IMR-90 (cell line): ENCODE measurements at regions of chr9 and their contacts with region 1.

Region 1: DNA sequence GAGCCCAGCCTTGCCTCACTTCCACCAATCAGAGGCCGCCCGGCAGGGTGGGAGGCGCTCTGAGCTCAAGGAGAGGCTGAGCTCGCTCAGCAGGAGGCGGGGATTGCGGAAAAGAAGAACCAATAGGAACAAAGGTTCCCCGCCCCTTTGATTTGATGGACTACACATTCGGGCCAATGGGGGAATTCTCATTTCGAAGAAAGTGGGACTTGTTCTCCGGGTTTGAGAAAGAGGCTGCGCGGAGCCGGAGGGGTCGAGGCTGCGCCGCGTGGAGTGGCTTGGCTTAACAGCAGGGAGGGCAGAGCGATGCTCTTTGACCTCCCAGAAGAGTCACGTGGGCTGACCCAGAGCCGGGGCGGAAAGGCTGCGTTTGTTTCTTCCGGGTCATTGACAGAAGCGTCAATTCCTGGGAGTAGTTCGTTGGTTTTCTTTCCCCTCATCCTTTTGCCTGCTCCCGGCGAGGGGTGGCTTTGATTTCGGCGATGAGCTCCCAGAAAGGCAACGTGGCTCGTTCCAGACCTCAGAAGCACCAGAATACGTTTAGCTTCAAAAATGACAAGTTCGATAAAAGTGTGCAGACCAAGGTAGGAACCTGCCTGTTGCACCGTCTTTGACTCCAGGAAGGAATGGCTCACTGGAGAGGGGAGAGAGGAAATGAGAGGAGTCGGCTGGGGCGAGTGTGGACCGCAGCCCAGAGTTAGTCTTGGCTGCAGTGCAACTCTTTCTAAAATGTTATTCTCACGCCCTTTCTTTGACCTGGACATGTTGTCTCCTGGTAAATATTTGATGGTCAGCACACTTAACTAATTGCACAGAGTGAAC is at the start of gene C9orf85:
- DNase-seq: peak; percentile 99
- ATAC-seq: peak; percentile 95
- H3K4me3 ChIP-seq: peak within 1 kb of the TSS; percentile 78
- H3K27ac ChIP-seq: peak within 1 kb of the TSS; percentile 88
- H3K4me1 ChIP-seq: peaks cover 2% of the 10 kb centered on the region; the same call in 1 of the 2 replicates
- H3K27me3 ChIP-seq: no peaks in the 10 kb centered on the region
- CTCF ChIP-seq: no peak
- POLR2A ChIP-seq: no peak
- RAD21 ChIP-seq: no peak
- total RNA-seq, gene C9orf85: 4.3 and 10.6 TPM in 2 replicates

Region 2: DNA sequence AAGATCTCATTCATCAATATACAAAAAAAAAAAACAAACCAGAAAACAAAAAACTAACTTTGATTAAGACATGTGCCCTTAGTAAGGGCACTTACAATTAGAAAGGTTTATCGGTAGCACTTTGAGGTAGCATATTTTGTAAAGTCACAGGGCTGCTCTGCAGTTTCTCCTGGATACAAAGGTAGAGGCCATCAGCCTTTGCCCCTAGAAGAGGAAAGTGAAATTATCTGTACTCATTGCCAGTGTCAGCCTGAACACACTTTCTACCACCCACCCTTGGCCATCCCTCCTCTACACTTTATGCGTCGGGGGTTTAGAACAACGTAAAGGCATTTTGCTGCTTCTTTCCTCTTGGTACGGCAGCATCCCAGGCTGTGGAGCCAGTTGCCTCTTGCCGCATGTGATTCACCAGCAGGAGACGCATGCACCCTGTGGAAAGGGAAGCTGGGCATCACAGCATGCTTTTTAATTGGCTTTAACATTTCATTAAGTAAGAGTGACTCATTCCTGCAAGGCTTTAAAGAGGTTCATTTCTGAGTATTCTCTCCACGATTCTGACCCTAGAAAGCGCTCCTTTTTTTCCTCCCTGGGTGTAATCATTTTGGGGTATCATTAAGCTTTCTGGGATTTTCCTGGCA is 227.7 kb before region 1 on chr9:
- CTCF ChIA-PET with region 1: no interaction called
- POLR2A ChIA-PET with region 1: no interaction called
- dilution Hi-C with region 1: no loop called
- in situ Hi-C with region 1: no loop called
- intact Hi-C with region 1: loop called (anchors 5 kb)
- DNase-seq: peak; percentile 61
- ATAC-seq: peak; percentile 53
- H3K4me3 ChIP-seq: no peak overlapping the region
- H3K27ac ChIP-seq: no peak overlapping the region
- H3K4me1 ChIP-seq: peaks cover 19% of the 10 kb centered on the region
- H3K27me3 ChIP-seq: no peaks in the 10 kb centered on the region
- CTCF ChIP-seq: peak; percentile 52
- POLR2A ChIP-seq: no peak
- RAD21 ChIP-seq: peak; percentile 54

Region 3: GRCh38 chr9:71819115-71819739 is 92.2 kb before region 1 on chr9:
- CTCF ChIA-PET with region 1: no interaction called
- POLR2A ChIA-PET with region 1: no interaction called
- dilution Hi-C with region 1: no loop called
- in situ Hi-C with region 1: no loop called
- intact Hi-C with region 1: loop called (anchors 1 kb)
- DNase-seq: peak; percentile 39
- ATAC-seq: no peak
- H3K4me3 ChIP-seq: no peak overlapping the region
- H3K27ac ChIP-seq: no peak overlapping the region
- H3K4me1 ChIP-seq: no peaks in the 10 kb centered on the region
- H3K27me3 ChIP-seq: no peaks in the 10 kb centered on the region; the same call in none of the 2 replicates
- CTCF ChIP-seq: peak; percentile 81
- POLR2A ChIP-seq: no peak
- RAD21 ChIP-seq: peak; percentile 64

Region 4: GRCh38 chr9:71897577-71897976 is 13.9 kb before region 1 on chr9:
- CTCF ChIA-PET with region 1: interaction called, 3 read pairs
- POLR2A ChIA-PET with region 1: no interaction called
- dilution Hi-C with region 1: no loop called
- in situ Hi-C with region 1: no loop called
- intact Hi-C with region 1: loop called (anchors 1 kb)
- DNase-seq: no peak
- ATAC-seq: no peak
- H3K4me3 ChIP-seq: no peak overlapping the region
- H3K27ac ChIP-seq: no peak overlapping the region
- H3K4me1 ChIP-seq: no peaks in the 10 kb centered on the region; the same call in none of the 2 replicates
- H3K27me3 ChIP-seq: no peaks in the 10 kb centered on the region
- CTCF ChIP-seq: no peak
- POLR2A ChIP-seq: no peak
- RAD21 ChIP-seq: no peak

Region 5: DNA sequence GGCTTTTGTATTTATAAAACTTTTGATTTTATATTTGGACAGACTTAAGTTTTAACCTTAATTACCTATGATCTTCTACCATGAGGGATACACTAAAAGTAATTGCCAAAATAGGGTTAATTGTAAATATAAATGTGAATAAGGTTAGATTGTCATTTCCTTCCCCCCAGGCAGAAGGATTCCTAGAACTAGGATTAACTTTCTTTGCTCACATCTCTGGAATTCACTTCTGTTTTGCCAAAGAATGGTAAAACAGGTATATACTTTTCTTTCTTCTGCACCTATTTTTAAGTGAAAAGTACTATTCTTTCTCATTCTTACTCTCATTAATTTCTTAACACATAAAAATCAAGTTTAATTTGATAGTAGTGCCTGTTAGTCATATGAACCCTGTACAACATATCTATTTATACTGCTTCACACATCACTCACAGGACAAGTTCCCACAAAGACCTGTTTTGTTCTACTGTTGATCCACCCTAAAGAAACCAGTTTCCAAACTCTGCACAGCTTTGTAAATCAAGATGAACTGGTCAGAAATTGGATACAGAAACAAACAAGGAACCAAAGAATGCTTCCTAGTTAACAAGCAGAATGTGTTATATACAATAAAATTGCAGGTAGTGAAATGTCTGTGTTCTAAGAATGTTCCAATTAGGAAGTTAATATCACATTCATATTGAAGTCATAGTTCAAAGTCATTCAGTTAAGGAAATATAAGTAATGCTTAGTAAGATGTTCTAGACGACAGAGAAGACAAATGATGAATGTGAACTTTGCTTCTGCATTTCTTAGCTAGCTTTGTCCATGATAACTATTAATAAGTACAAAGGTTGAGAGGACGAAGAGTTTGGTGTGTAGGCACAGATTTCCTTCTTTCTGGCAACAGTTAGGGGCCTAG is 33.3 kb after region 1 on chr9:
- CTCF ChIA-PET with region 1: no interaction called
- POLR2A ChIA-PET with region 1: no interaction called
- dilution Hi-C with region 1: no loop called
- in situ Hi-C with region 1: no loop called
- intact Hi-C with region 1: loop called (anchors 5 kb)
- DNase-seq: no peak
- ATAC-seq: no peak
- H3K4me3 ChIP-seq: no peak overlapping the region
- H3K27ac ChIP-seq: no peak overlapping the region
- H3K4me1 ChIP-seq: peaks cover 5% of the 10 kb centered on the region; the same call in 1 of the 2 replicates
- H3K27me3 ChIP-seq: no peaks in the 10 kb centered on the region
- CTCF ChIP-seq: no peak
- POLR2A ChIP-seq: no peak
- RAD21 ChIP-seq: no peak